Caco-2 (cell line): ENCODE measurements at regions of chr1 and their contacts with region 1.

Region 1: DNA sequence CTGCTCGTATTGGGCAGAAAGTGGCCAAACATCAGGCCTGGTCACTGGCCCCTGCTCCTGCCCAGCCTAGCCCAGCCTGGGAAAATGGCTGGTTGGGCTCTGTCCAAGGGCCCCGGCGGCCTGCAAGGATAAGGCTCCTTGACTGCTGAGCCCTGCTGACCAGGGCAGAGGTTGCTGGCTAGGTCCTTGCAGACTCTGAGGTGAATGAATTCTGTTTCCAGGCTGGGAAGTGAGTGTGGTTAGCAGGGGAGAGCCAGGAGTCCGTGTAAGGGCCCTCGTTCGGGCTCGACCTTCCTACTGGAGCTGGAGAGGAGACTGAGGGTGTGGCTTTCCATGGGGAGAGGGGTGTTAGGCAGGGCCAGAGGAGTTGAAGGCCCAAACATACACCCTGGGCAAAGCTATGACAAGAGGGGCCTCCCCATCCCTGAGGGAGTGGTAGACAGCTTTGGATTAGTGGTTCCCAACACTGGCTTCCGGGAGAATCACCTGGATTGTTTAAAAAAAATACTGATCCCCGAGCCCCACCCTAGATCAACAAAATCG is 20.6 kb downstream of the CSF1 start:
- DNase-seq: peak; percentile 83 to 90
- H3K4me3 ChIP-seq: no peak overlapping the region
- H3K4me3 Mint-ChIP-seq: peak overlapping the region; percentile 14
- H3K27ac Mint-ChIP-seq: peak overlapping the region; percentile 83
- H3K4me1 ChIP-seq: peaks cover 57% of the 10 kb centered on the region
- H3K4me1 Mint-ChIP-seq: peaks cover 23% of the 10 kb centered on the region
- H3K27me3 ChIP-seq: no peaks in the 10 kb centered on the region
- H3K27me3 Mint-ChIP-seq: no peaks in the 10 kb centered on the region
- CTCF ChIP-seq: no peak

Region 2: DNA sequence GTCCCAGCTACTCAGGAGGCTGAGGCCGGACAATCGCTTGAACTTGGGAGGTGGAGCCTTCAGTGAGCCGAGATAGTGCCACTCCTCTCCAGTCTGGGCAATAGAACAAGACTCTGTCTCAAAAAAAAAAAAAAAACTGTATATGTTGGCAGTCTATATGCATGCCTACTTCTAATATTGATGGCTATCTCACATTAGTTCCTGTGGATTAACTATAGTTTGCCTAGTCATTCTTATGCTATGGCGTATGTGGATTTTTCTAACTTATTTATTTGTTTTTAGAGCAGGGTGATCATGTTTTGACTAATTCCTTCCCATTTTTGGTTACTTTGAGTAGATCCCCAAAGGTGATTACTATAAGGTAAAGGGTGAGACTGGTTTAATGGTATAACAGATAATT is 234.2 kb before region 1 on chr1:
- CTCF ChIA-PET with region 1: no interaction called
- POLR2A ChIA-PET with region 1: no interaction called
- intact Hi-C with region 1: no loop called
- DNase-seq: no peak
- H3K4me3 ChIP-seq: no peak overlapping the region
- H3K4me3 Mint-ChIP-seq: no peak overlapping the region
- H3K27ac Mint-ChIP-seq: no peak overlapping the region
- H3K4me1 ChIP-seq: no peaks in the 10 kb centered on the region
- H3K4me1 Mint-ChIP-seq: no peaks in the 10 kb centered on the region
- H3K27me3 ChIP-seq: no peaks in the 10 kb centered on the region
- H3K27me3 Mint-ChIP-seq: no peaks in the 10 kb centered on the region
- CTCF ChIP-seq: no peak

Region 3: DNA sequence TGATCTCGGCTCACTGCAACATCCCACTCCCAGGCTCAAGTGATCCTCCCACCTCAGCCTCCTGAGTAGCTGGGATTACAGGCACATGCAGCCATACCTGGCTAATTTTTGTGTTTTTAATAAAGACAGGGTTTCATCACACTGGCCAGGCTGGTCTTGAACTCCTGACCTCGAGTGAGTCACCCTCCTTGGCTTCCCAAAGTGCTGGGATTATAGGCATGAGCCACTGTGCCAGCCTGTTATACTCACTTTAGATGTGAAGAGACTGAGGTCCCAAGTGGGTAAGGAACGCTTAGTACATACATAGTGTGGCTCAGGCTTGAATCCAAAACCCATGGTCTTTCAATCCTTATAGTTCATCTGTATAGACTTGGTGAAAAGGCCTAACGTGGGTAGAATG is 103.8 kb before region 1 on chr1:
- CTCF ChIA-PET with region 1: no interaction called
- POLR2A ChIA-PET with region 1: no interaction called
- intact Hi-C with region 1: no loop called
- DNase-seq: no peak
- H3K4me3 ChIP-seq: no peak overlapping the region
- H3K4me3 Mint-ChIP-seq: no peak overlapping the region
- H3K27ac Mint-ChIP-seq: no peak overlapping the region
- H3K4me1 ChIP-seq: peaks cover 10% of the 10 kb centered on the region
- H3K4me1 Mint-ChIP-seq: peaks cover 19% of the 10 kb centered on the region
- H3K27me3 ChIP-seq: no peaks in the 10 kb centered on the region
- H3K27me3 Mint-ChIP-seq: no peaks in the 10 kb centered on the region
- CTCF ChIP-seq: no peak

Region 4: GRCh38 chr1:109947582-109948286 is 16.5 kb after region 1 on chr1:
- CTCF ChIA-PET with region 1: no interaction called
- POLR2A ChIA-PET with region 1: no interaction called
- intact Hi-C with region 1: loop called (anchors 2 kb)
- DNase-seq: no peak
- H3K4me3 ChIP-seq: no peak overlapping the region
- H3K4me3 Mint-ChIP-seq: peak overlapping the region; percentile 33
- H3K27ac Mint-ChIP-seq: peak overlapping the region; percentile 84
- H3K4me1 ChIP-seq: peaks cover 37% of the 10 kb centered on the region
- H3K4me1 Mint-ChIP-seq: peaks cover 22% of the 10 kb centered on the region
- H3K27me3 ChIP-seq: no peaks in the 10 kb centered on the region
- H3K27me3 Mint-ChIP-seq: no peaks in the 10 kb centered on the region
- CTCF ChIP-seq: no peak

Region 5: DNA sequence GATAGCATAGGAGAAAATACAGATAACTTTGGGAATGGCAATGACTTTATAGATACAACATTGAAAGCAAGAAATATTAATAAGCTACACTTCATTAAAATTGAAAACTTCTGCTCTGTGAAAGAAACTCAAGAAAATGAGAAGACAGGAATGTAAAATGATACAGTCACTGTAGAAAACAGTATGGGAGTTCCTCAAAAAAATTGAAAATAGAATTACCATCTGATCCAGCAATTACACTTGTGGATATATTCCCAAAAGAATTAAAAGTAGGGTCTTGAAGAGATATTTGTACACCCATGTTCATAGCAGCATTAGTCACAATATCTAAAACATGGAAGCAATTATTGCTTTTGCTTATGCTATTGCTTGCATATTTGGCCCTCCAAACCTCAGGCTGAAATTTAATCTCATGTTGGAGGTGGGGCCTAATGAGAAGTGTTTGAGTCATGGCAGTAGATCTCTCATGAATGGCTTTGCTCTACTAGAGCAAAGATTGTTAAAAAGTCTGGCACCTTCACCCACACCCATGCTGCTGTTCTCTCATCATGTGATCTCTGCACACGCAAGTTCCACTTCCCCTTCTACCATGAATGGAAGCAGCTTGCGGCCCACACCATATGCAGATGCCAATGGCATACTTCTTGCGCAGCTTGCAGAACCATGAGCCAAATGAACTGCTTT is 38.0 kb after region 1 on chr1:
- CTCF ChIA-PET with region 1: no interaction called
- POLR2A ChIA-PET with region 1: no interaction called
- intact Hi-C with region 1: no loop called
- DNase-seq: no peak
- H3K4me3 ChIP-seq: no peak overlapping the region
- H3K4me3 Mint-ChIP-seq: no peak overlapping the region
- H3K27ac Mint-ChIP-seq: no peak overlapping the region
- H3K4me1 ChIP-seq: no peaks in the 10 kb centered on the region
- H3K4me1 Mint-ChIP-seq: peaks cover under 1% of the 10 kb centered on the region
- H3K27me3 ChIP-seq: no peaks in the 10 kb centered on the region
- H3K27me3 Mint-ChIP-seq: no peaks in the 10 kb centered on the region
- CTCF ChIP-seq: no peak